Naive thymus-derived CD4-positive, alpha-beta T cell (primary cell): ENCODE measurements at regions of chr2 and their contacts with region 1.

Region 1: DNA sequence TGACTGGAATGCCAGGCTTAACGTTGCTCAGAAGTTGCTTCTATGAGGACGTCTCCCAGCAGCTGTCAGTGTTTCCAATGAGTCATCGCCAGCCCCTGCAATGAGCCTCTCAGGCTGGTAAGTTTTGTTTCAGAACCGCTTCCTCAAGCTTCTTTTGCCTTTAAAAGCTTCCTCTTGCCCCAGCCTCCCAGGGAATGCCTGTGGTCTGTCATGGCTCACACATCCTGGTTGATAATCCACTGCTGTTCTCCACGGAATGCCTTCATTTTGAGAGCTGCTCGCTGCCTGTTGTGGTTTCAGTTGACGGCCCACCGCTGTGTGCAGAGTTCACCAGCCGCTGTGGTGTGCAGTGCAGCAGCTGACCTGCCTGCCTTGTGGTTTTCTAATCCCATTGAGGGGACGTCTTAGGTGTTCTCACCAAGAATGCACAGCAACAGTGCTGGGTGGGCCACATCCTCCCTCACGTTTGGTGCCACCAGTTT is 96.4 kb downstream of the RTP5 start:
- DNase-seq: peak in 7 of 9 donors; percentile 9 to 57 (median 26)
- ATAC-seq: peak; percentile 82
- H3K4me3 ChIP-seq: no peak overlapping the region
- H3K4me3 Mint-ChIP-seq: peak overlapping the region; percentile 20 to 80 (median 73)
- H3K27ac ChIP-seq: no peak overlapping the region
- H3K27ac Mint-ChIP-seq: peak overlapping the region in 8 of 9 donors; percentile 38 to 89 (median 82)
- H3K4me1 ChIP-seq: peaks cover 8% of the 10 kb centered on the region in 2 donors
- H3K4me1 Mint-ChIP-seq: peaks cover 10 to 29% (median 21%) of the 10 kb centered on the region in 7 donors
- H3K27me3 ChIP-seq: no peaks in the 10 kb centered on the region
- H3K27me3 Mint-ChIP-seq: no peaks in the 10 kb centered on the region

Region 2: GRCh38 chr2:241659150-241659739 is 306.7 kb before region 1 on chr2:
- CTCF ChIA-PET with region 1: no interaction called
- POLR2A ChIA-PET with region 1: no interaction called
- intact Hi-C with region 1: no loop called
- DNase-seq: peak in 6 of 9 donors; percentile 15 to 53 (median 41)
- ATAC-seq: peak; percentile 41
- H3K4me3 ChIP-seq: no peak overlapping the region
- H3K4me3 Mint-ChIP-seq: no peak overlapping the region
- H3K27ac ChIP-seq: no peak overlapping the region
- H3K27ac Mint-ChIP-seq: peak overlapping the region in 1 of 9 donors; percentile 83
- H3K4me1 ChIP-seq: no peaks in the 10 kb centered on the region
- H3K4me1 Mint-ChIP-seq: peaks cover 0 to 2% (median 0%) of the 10 kb centered on the region in 7 donors
- H3K27me3 ChIP-seq: no peaks in the 10 kb centered on the region
- H3K27me3 Mint-ChIP-seq: no peaks in the 10 kb centered on the region

Region 3: GRCh38 chr2:241926541-241927311 is 39.2 kb before region 1 on chr2:
- CTCF ChIA-PET with region 1: no interaction called
- POLR2A ChIA-PET with region 1: no interaction called
- intact Hi-C with region 1: no loop called
- DNase-seq: no peak
- ATAC-seq: no peak
- H3K4me3 ChIP-seq: no peak overlapping the region
- H3K4me3 Mint-ChIP-seq: no peak overlapping the region
- H3K27ac ChIP-seq: no peak overlapping the region
- H3K27ac Mint-ChIP-seq: no peak overlapping the region
- H3K4me1 ChIP-seq: no peaks in the 10 kb centered on the region
- H3K4me1 Mint-ChIP-seq: peaks cover 6 to 25% (median 14%) of the 10 kb centered on the region in 7 donors
- H3K27me3 ChIP-seq: no peaks in the 10 kb centered on the region
- H3K27me3 Mint-ChIP-seq: no peaks in the 10 kb centered on the region

Region 4: GRCh38 chr2:241983571-241984270 is 17.7 kb after region 1 on chr2:
- CTCF ChIA-PET with region 1: no interaction called
- POLR2A ChIA-PET with region 1: interaction called, 4 read pairs
- intact Hi-C with region 1: loop called in 1 of 2 experiments (anchors 2 kb)
- DNase-seq: no peak
- ATAC-seq: no peak
- H3K4me3 ChIP-seq: no peak overlapping the region
- H3K4me3 Mint-ChIP-seq: no peak overlapping the region
- H3K27ac ChIP-seq: no peak overlapping the region
- H3K27ac Mint-ChIP-seq: peak overlapping the region in 8 of 9 donors; percentile 21 to 95 (median 90)
- H3K4me1 ChIP-seq: peaks cover 13 to 14% of the 10 kb centered on the region in 2 donors
- H3K4me1 Mint-ChIP-seq: peaks cover 6 to 31% (median 23%) of the 10 kb centered on the region in 7 donors
- H3K27me3 ChIP-seq: no peaks in the 10 kb centered on the region
- H3K27me3 Mint-ChIP-seq: no peaks in the 10 kb centered on the region

Region 5: DNA sequence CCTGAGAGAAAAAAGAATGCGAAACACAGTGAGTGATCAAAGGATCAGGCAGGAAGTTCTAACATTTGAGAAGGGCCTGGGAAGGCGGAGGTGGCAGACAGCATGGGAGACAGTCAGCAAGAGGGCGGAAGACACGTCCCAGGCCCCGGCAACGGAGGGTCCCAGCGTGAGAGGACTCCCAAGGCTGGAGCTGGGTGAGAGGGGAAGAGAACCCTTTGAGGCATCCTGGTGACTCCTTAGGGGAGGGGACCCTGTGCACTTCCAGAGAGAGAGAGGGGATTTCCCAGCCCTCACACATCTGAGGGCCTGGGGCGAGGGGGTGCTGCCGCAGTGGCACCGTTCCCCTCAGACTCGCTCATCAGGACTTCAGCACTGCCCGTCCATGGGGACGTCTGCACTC is 37.0 kb after region 1 on chr2:
- CTCF ChIA-PET with region 1: no interaction called
- POLR2A ChIA-PET with region 1: no interaction called
- intact Hi-C with region 1: loop called in 1 of 2 experiments (anchors 2 kb)
- DNase-seq: peak in 7 of 9 donors; percentile 25 to 53 (median 49)
- ATAC-seq: peak; percentile 64
- H3K4me3 ChIP-seq: no peak overlapping the region
- H3K4me3 Mint-ChIP-seq: peak overlapping the region; percentile 12 to 83 (median 78)
- H3K27ac ChIP-seq: peak overlapping the region; percentile 33
- H3K27ac Mint-ChIP-seq: peak overlapping the region in 8 of 9 donors; percentile 83 to 95 (median 92)
- H3K4me1 ChIP-seq: peaks cover 0 to 16% of the 10 kb centered on the region in 2 donors
- H3K4me1 Mint-ChIP-seq: peaks cover 5 to 35% (median 20%) of the 10 kb centered on the region in 7 donors
- H3K27me3 ChIP-seq: no peaks in the 10 kb centered on the region
- H3K27me3 Mint-ChIP-seq: peaks cover 0 to 3% (median 0%) of the 10 kb centered on the region in 5 donors

Region 6: DNA sequence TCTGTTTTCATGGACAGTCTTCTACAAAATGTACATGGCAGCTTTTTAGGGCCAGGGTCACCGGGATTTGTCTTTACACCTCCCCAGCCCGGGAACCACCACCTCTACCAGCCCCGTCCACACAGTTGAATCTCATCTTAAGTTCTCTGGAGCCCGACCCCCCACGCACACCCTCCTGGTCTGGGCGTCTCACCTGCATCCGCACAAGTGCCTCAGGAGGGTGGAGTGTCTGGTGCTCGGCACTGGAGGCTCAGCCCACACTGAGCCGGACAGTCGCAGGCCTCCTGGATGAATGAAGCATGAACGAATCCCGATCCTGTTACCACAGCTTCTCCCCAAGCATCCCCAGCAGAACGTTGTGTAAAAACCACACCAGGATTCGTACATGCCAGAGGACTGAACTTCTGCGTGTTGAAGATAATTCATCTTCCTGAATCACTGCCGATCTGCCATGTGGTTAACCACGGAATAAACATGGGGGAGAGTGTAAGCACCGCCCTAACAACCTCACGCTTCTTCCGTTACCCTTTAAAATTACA is 65.6 kb after region 1 on chr2:
- CTCF ChIA-PET with region 1: no interaction called
- POLR2A ChIA-PET with region 1: no interaction called
- intact Hi-C with region 1: loop called in 1 of 2 experiments (anchors 1 kb)
- DNase-seq: peak in 8 of 9 donors; percentile 60 to 86 (median 81)
- ATAC-seq: peak; percentile 93
- H3K4me3 ChIP-seq: peak overlapping the region; percentile 85
- H3K4me3 Mint-ChIP-seq: peak overlapping the region; percentile 88 to 96 (median 92)
- H3K27ac ChIP-seq: peak overlapping the region; percentile 67
- H3K27ac Mint-ChIP-seq: peak overlapping the region; percentile 80 to 98 (median 93)
- H3K4me1 ChIP-seq: peaks cover 21 to 24% of the 10 kb centered on the region in 2 donors
- H3K4me1 Mint-ChIP-seq: peaks cover 18 to 70% (median 65%) of the 10 kb centered on the region in 7 donors
- H3K27me3 ChIP-seq: peaks cover 0 to 4% of the 10 kb centered on the region in 2 donors
- H3K27me3 Mint-ChIP-seq: peaks cover 0 to 47% (median 0%) of the 10 kb centered on the region in 5 donors

Region 7: DNA sequence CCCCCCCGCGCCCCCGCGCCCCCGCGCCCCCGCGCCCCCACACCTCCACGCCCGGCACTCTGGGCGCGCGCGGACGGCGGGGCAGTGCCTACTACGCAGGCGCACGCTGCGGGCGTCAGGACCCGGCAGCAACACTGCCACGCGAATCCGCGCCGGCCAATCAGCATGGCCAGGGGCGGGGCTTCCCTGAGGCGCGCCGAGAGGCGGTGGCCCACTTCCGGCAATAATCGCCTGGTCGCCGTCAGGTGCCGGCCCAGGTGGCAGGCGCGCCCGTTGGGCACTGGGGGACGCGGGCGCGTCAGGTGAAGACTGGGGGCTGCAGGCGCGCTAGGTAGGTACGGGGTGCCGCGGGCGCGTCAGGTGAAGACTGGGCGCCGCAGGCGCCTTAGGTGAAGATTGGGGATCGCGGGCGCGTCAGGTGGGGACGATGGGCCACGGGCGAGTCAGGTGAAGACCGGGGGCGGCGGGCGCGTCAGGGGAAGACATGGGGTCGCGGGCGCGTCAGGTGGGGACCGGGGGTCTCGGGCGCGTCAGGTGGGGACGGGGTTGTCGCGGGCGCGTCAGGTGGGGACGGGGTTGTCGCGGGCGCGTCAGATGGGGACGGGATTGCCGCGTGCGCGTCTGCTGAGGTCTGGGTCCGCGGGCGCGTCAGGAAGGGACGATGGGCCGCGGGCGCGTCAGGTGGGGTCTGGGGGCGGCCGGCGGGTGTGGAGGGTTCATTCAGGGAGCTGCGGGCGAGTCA is 122.7 kb after region 1 on chr2:
- CTCF ChIA-PET with region 1: no interaction called
- POLR2A ChIA-PET with region 1: no interaction called
- intact Hi-C with region 1: loop called in 1 of 2 experiments (anchors 5 kb)
- DNase-seq: peak; percentile 90 to 94 (median 92)
- ATAC-seq: peak; percentile 95
- H3K4me3 ChIP-seq: peak overlapping the region; percentile 55
- H3K4me3 Mint-ChIP-seq: peak overlapping the region; percentile 81 to 99 (median 88)
- H3K27ac ChIP-seq: peak overlapping the region; percentile 75
- H3K27ac Mint-ChIP-seq: peak overlapping the region; percentile 61 to 93 (median 89)
- H3K4me1 ChIP-seq: peaks cover 4 to 11% of the 10 kb centered on the region in 2 donors
- H3K4me1 Mint-ChIP-seq: peaks cover 27 to 57% (median 41%) of the 10 kb centered on the region in 7 donors
- H3K27me3 ChIP-seq: no peaks in the 10 kb centered on the region
- H3K27me3 Mint-ChIP-seq: peaks cover 0 to 18% (median 0%) of the 10 kb centered on the region in 5 donors